CD4-positive, alpha-beta T cell (primary cell): ENCODE measurements at regions of chr17 and their contacts with region 1.

Region 1: DNA sequence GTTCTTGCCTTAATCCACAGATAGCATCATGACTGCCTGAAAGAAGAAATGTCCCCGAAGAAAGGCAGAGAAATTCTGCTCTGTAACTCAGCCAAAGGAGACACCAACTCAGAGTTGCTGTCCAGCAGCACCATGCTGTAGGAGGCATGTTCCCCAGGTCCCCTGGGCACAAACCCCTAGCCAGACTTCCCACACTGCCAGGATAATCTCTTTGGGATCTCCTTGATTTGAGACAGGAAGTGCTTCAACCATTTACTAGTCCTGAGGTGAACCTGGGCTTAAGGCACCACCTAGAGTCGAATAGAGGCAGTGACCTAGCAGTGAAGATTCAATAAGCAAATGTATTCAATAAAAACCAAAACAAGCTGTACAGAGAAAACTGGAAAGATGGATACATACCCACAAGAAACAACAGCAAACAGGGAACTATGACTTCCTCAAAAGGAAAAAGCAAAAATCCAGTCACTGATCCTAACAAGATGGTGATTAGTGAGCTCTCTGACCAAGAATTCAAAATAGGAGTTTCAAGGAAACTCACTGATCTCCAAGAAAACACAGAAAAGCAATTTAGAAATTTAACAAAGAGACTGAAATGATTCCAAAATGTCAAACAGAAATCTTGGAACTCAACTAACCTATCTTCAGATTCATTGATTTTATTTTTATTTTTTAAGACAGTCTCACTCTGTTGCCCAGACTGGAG is 5.7 kb downstream of the OR4D2 start:
- DNase-seq: peak in 13 of 14 experiments; percentile 16 to 81 (median 31)
- ATAC-seq: peak; percentile 90
- H3K4me3 ChIP-seq: peak overlapping the region; percentile 4
- H3K4me3 Mint-ChIP-seq: no peak overlapping the region
- H3K27ac ChIP-seq: peak overlapping the region in 1 of 2 donors; percentile 57
- H3K27ac Mint-ChIP-seq: peak overlapping the region; percentile 31
- H3K4me1 ChIP-seq: peaks cover 43% of the 10 kb centered on the region
- H3K4me1 Mint-ChIP-seq: peaks cover 47% of the 10 kb centered on the region
- H3K27me3 ChIP-seq: no peaks in the 10 kb centered on the region
- H3K27me3 Mint-ChIP-seq: peaks cover 3% of the 10 kb centered on the region
- CTCF ChIP-seq: peak; percentile 87

Region 2: DNA sequence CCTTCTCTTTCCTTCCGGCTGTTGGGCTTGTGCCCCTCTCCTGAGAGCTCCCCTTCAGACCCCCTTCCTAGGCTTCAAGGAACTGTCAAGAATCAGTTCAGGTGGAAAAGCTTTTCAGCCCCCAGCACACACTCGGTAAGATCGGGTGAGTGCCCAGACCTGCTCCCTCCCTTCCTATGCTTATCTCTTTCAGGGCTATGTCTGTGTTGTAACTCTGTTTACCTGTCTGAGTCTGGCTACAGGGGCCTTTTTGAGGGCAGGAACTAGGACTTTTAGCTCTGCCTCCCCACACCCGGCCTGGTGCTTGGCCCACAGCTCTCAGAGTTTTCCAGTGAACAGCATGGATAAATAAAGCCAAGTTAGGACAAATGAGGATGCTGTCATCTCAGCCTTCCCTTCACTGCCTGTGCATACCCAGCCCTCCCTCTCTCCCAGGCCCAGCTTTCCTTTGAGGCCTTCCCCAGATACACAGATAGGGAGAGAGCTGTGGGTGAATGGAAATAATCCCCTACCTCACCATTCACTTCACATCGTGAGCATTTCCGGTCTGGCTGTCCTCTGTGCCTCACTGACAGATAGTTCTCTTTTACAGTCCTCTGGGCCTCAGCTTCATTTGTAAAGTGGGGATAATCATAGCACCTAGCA is 317.0 kb before region 1 on chr17:
- CTCF ChIA-PET with region 1: no interaction called
- POLR2A ChIA-PET with region 1: no interaction called
- intact Hi-C with region 1: loop called in 1 of 2 experiments (anchors 5 kb)
- DNase-seq: no peak
- ATAC-seq: no peak
- H3K4me3 ChIP-seq: no peak overlapping the region
- H3K4me3 Mint-ChIP-seq: peak overlapping the region; percentile 20
- H3K27ac ChIP-seq: no peak overlapping the region
- H3K27ac Mint-ChIP-seq: no peak overlapping the region
- H3K4me1 ChIP-seq: peaks cover 18% of the 10 kb centered on the region
- H3K4me1 Mint-ChIP-seq: peaks cover 16% of the 10 kb centered on the region
- H3K27me3 ChIP-seq: peaks cover 0 to 3% of the 10 kb centered on the region in 2 experiments
- H3K27me3 Mint-ChIP-seq: peaks cover 6% of the 10 kb centered on the region
- CTCF ChIP-seq: no peak

Region 3: DNA sequence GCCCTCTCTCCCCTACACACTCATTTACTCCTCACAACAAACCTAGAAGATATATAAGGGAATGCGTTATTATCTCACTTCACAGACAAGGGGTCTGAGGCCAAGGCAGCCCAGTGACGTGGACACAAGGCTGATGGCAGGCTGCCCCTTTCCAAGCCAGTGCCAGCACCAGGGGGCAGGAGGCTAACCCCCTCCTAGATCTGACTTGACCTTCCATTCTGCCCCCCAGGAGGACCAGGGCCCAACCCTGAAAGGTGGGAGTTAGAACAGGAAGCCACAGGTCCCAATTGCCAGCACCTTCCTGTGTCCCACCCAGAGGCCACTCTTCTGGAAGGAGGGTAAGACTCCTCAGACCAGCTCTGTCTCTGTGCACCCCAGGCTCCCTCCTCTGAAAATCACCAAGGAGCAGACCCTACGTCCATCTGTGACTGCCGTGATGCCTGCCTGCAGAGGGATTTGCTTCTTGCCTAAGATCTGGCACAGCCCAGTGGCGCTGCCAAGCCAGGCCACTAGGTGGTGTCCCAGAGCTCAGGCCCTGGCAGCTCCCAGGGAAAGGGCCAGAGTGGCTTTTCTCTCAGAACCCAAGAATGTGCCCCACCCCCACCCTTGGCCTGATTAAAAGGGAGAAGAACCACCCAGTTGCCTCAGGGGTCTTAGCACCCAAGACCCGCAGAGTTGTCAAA is 280.2 kb before region 1 on chr17:
- CTCF ChIA-PET with region 1: no interaction called
- POLR2A ChIA-PET with region 1: no interaction called
- intact Hi-C with region 1: loop called in 1 of 2 experiments (anchors 5 kb)
- DNase-seq: peak; percentile 57 to 85 (median 75)
- ATAC-seq: peak; percentile 94
- H3K4me3 ChIP-seq: no peak overlapping the region
- H3K4me3 Mint-ChIP-seq: no peak overlapping the region
- H3K27ac ChIP-seq: no peak overlapping the region
- H3K27ac Mint-ChIP-seq: no peak overlapping the region
- H3K4me1 ChIP-seq: peaks cover 11% of the 10 kb centered on the region
- H3K4me1 Mint-ChIP-seq: peaks cover 6% of the 10 kb centered on the region
- H3K27me3 ChIP-seq: peaks cover 0 to 2% of the 10 kb centered on the region in 2 experiments
- H3K27me3 Mint-ChIP-seq: peaks cover 6% of the 10 kb centered on the region
- CTCF ChIP-seq: peak; percentile 90

Region 4: GRCh38 chr17:58121925-58122324 is 50.6 kb before region 1 on chr17:
- CTCF ChIA-PET with region 1: interaction called, 8 read pairs
- POLR2A ChIA-PET with region 1: interaction called, 12 read pairs
- intact Hi-C with region 1: loop called (anchors 1 kb)
- DNase-seq: peak in 13 of 14 experiments; percentile 3 to 82 (median 38)
- ATAC-seq: peak; percentile 87
- H3K4me3 ChIP-seq: no peak overlapping the region
- H3K4me3 Mint-ChIP-seq: no peak overlapping the region
- H3K27ac ChIP-seq: no peak overlapping the region
- H3K27ac Mint-ChIP-seq: no peak overlapping the region
- H3K4me1 ChIP-seq: no peaks in the 10 kb centered on the region
- H3K4me1 Mint-ChIP-seq: peaks cover 15% of the 10 kb centered on the region
- H3K27me3 ChIP-seq: peaks cover 0 to 2% of the 10 kb centered on the region in 2 experiments
- H3K27me3 Mint-ChIP-seq: peaks cover 9% of the 10 kb centered on the region
- CTCF ChIP-seq: peak; percentile 82

Region 5: GRCh38 chr17:58156839-58157803 is 15.4 kb before region 1 on chr17:
- CTCF ChIA-PET with region 1: interaction called, 5 read pairs
- POLR2A ChIA-PET with region 1: interaction called, 26 read pairs
- intact Hi-C with region 1: loop called in 1 of 2 experiments (anchors 2 kb)
- DNase-seq: peak; percentile 28 to 82 (median 45)
- ATAC-seq: peak; percentile 50
- H3K4me3 ChIP-seq: peak overlapping the region; percentile 76
- H3K4me3 Mint-ChIP-seq: peak overlapping the region; percentile 91
- H3K27ac ChIP-seq: peak overlapping the region; percentile 75 to 86
- H3K27ac Mint-ChIP-seq: peak overlapping the region; percentile 92
- H3K4me1 ChIP-seq: peaks cover 55% of the 10 kb centered on the region
- H3K4me1 Mint-ChIP-seq: peaks cover 84% of the 10 kb centered on the region
- H3K27me3 ChIP-seq: no peaks in the 10 kb centered on the region
- H3K27me3 Mint-ChIP-seq: no peaks in the 10 kb centered on the region
- CTCF ChIP-seq: no peak

Region 6: GRCh38 chr17:58556833-58557250 is 384.3 kb after region 1 on chr17:
- CTCF ChIA-PET with region 1: no interaction called
- POLR2A ChIA-PET with region 1: no interaction called
- intact Hi-C with region 1: no loop called
- DNase-seq: peak in 1 of 14 experiments; percentile 8
- ATAC-seq: no peak
- H3K4me3 ChIP-seq: no peak overlapping the region
- H3K4me3 Mint-ChIP-seq: no peak overlapping the region
- H3K27ac ChIP-seq: no peak overlapping the region
- H3K27ac Mint-ChIP-seq: no peak overlapping the region
- H3K4me1 ChIP-seq: no peaks in the 10 kb centered on the region
- H3K4me1 Mint-ChIP-seq: peaks cover 6% of the 10 kb centered on the region
- H3K27me3 ChIP-seq: no peaks in the 10 kb centered on the region
- H3K27me3 Mint-ChIP-seq: no peaks in the 10 kb centered on the region
- CTCF ChIP-seq: no peak